ENCODE measurements at regions of chr22 and their contacts with region 1.

Region 1: DNA sequence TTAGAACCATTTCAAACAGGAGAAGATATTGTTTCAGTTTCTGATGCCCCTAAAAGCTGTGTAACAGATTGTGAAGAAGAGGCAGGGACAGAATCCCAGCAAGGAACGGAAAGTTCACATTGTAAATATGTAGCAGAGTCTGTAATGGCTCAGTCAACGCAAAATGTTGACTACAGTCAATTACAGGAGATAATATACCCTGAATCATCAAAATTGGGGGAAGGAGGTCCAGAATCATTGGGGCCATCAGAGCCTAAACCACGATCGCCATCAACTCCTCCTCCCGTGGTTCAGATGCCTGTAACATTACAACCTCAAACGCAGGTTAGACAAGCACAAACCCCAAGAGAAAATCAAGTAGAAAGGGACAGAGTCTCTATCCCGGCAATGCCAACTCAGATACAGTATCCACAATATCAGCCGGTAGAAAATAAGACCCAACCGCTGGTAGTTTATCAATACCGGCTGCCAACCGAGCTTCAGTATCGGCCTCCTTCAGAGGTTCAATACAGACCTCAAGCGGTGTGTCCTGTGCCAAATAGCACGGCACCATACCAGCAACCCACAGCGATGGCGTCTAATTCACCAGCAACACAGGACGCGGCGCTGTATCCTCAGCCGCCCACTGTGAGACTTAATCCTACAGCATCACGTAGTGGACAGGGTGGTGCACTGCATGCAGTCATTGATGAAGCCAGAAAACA is 40.8 kb downstream of the IGLL1 start:
- DNase-seq: peak; percentile 53 to 86 (median 72)
- ATAC-seq: peak; percentile 100
- H3K4me3 ChIP-seq: no peak overlapping the region
- H3K4me3 Mint-ChIP-seq: peak overlapping the region; percentile 59
- H3K27ac ChIP-seq: no peak overlapping the region
- H3K27ac Mint-ChIP-seq: no peak overlapping the region
- H3K4me1 ChIP-seq: no peaks in the 10 kb centered on the region
- H3K4me1 Mint-ChIP-seq: peaks cover 8% of the 10 kb centered on the region
- H3K27me3 ChIP-seq: no peaks in the 10 kb centered on the region
- H3K27me3 Mint-ChIP-seq: peaks cover 2% of the 10 kb centered on the region
- CTCF ChIP-seq: peak; percentile 70

Region 2: DNA sequence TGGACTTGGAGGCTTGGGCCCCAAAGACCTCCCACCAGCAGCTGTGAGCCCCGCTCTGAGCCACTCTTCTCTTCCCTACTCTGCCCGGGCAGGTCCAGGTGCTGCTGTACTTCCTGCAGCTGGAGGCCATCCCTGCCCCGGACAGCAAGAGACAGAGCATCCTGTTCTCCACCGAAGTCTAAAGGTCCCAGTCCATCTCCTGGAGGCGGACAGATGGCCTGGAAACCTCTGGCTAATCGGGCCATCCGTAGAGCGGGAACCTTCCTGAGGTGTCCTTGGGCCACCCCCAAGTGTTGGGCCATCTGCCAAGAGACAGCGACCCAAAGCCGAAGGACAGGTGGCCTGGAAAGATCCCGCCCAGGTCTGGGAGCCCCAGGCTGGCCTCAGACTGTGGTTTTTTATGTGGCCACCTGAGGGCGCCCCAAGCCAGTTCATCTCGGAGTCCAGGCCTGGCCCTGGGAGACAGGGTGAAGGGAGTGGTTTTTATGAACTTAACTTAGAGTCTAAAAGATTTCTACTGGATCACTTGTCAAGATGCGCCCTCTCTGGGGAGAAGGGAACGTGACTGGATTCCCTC is 223.9 kb before region 1 on chr22:
- CTCF ChIA-PET with region 1: no interaction called
- POLR2A ChIA-PET with region 1: no interaction called
- intact Hi-C with region 1: loop called in 1 of 2 experiments (anchors 5 kb)
- DNase-seq: peak; percentile 8 to 74 (median 56)
- ATAC-seq: no peak
- H3K4me3 ChIP-seq: no peak overlapping the region
- H3K4me3 Mint-ChIP-seq: no peak overlapping the region
- H3K27ac ChIP-seq: no peak overlapping the region
- H3K27ac Mint-ChIP-seq: no peak overlapping the region
- H3K4me1 ChIP-seq: no peaks in the 10 kb centered on the region
- H3K4me1 Mint-ChIP-seq: peaks cover 7% of the 10 kb centered on the region
- H3K27me3 ChIP-seq: no peaks in the 10 kb centered on the region
- H3K27me3 Mint-ChIP-seq: no peaks in the 10 kb centered on the region
- CTCF ChIP-seq: peak; percentile 57

Region 3: GRCh38 chr22:23402275-23403151 is 136.8 kb before region 1 on chr22:
- CTCF ChIA-PET with region 1: no interaction called
- POLR2A ChIA-PET with region 1: no interaction called
- intact Hi-C with region 1: loop called (anchors 1 to 10 kb)
- DNase-seq: peak in 8 of 9 experiments; percentile 21 to 69 (median 48)
- ATAC-seq: peak; percentile 88
- H3K4me3 ChIP-seq: no peak overlapping the region
- H3K4me3 Mint-ChIP-seq: peak overlapping the region; percentile 45
- H3K27ac ChIP-seq: no peak overlapping the region
- H3K27ac Mint-ChIP-seq: no peak overlapping the region
- H3K4me1 ChIP-seq: no peaks in the 10 kb centered on the region
- H3K4me1 Mint-ChIP-seq: no peaks in the 10 kb centered on the region
- H3K27me3 ChIP-seq: no peaks in the 10 kb centered on the region
- H3K27me3 Mint-ChIP-seq: no peaks in the 10 kb centered on the region
- CTCF ChIP-seq: peak; percentile 35

Region 4: DNA sequence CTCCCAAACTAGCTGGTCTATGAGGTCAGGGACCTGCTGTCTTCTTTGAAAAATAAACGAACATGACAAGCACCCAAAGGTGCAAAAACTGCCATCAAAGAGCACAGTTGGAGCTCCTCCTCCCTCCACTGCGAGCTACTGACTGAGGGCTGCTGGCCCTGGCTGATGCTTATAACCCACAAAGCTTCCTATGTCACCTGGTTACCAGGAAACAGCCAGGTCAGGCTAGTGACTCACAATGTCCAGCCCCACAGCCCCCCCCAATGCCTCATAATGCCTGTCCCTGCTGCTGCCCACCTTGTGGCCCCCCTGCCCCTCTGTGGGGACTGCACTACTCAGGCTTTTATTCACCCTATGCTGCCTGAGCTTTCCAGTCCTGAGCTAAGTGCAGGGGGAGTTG is 92.9 kb after region 1 on chr22 and contains the start of gene DRICH1:
- CTCF ChIA-PET with region 1: no interaction called
- POLR2A ChIA-PET with region 1: no interaction called
- intact Hi-C with region 1: no loop called
- DNase-seq: peak in 2 of 9 experiments; percentile 35 to 38
- ATAC-seq: peak; percentile 57
- H3K4me3 ChIP-seq: no peak within 1 kb of the TSS
- H3K4me3 Mint-ChIP-seq: no peak within 1 kb of the TSS
- H3K27ac ChIP-seq: no peak within 1 kb of the TSS
- H3K27ac Mint-ChIP-seq: peak within 1 kb of the TSS; percentile 45
- H3K4me1 ChIP-seq: no peaks in the 10 kb centered on the region
- H3K4me1 Mint-ChIP-seq: peaks cover 4% of the 10 kb centered on the region
- H3K27me3 ChIP-seq: no peaks in the 10 kb centered on the region
- H3K27me3 Mint-ChIP-seq: no peaks in the 10 kb centered on the region
- CTCF ChIP-seq: no peak
- total RNA-seq, gene DRICH1: 0.56 to 0.87 TPM

Measured in CD8-positive, alpha-beta T cell (primary cell).